ENCODE measurements at regions of chr2 and their contacts with region 1.

Region 1: GRCh38 chr2:97710596-97711386 is 2.6 kb upstream of the ZAP70 start:
- DNase-seq: no peak
- H3K4me3 ChIP-seq: no peak overlapping the region
- H3K27ac ChIP-seq: no peak overlapping the region
- H3K4me1 ChIP-seq: peaks cover 0 to 3% (median 0%) of the 10 kb centered on the region in 4 experiments; a peak in 3 of 7 replicates
- H3K27me3 ChIP-seq: no peaks in the 10 kb centered on the region
- CTCF ChIP-seq: no peak
- EP300 ChIP-seq: no peak
- POLR2A ChIP-seq: no peak
- RAD21 ChIP-seq: no peak

Region 2: DNA sequence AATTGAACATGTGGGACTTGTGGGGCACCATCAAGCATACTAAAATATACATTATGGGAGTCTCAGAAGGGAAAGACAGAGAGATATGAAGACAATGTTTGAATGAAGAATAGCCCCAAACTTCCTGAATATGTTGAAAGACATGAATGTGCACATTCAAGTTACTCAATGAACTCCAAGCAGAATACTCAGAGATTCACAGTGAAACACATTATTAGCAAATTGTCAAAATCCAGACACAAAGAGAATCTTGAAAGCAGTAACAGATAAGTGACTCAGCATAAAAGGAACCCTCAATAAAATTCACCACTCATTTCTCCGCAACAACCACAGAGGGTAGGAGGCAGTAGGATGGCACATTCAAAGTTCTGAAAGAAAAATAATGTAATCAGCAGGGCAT is 32.5 kb before region 1 on chr2:
- CTCF ChIA-PET with region 1: no interaction called
- POLR2A ChIA-PET with region 1: no interaction called
- DNase-seq: no peak
- H3K4me3 ChIP-seq: no peak overlapping the region
- H3K27ac ChIP-seq: no peak overlapping the region
- H3K4me1 ChIP-seq: 0 out of 7 replicates have a peak, but pooled peaks cover 0 to 3% (median under 1%) of the 10 kb centered on the region in 4 experiments
- H3K27me3 ChIP-seq: no peaks in the 10 kb centered on the region
- CTCF ChIP-seq: no peak
- EP300 ChIP-seq: no peak
- POLR2A ChIP-seq: no peak
- RAD21 ChIP-seq: no peak

Region 3: GRCh38 chr2:97728091-97728731 is 17.4 kb after region 1 on chr2:
- CTCF ChIA-PET with region 1: interaction called, 22 read pairs
- POLR2A ChIA-PET with region 1: interaction called, 3 read pairs
- DNase-seq: no peak
- H3K4me3 ChIP-seq: no peak overlapping the region
- H3K27ac ChIP-seq: no peak overlapping the region
- H3K4me1 ChIP-seq: no peaks in the 10 kb centered on the region; a peak in 1 of 7 replicates
- H3K27me3 ChIP-seq: no peaks in the 10 kb centered on the region
- CTCF ChIP-seq: no peak
- EP300 ChIP-seq: no peak
- POLR2A ChIP-seq: no peak
- RAD21 ChIP-seq: no peak

Region 4: GRCh38 chr2:97900806-97901205 is 190.0 kb after region 1 on chr2:
- CTCF ChIA-PET with region 1: no interaction called
- POLR2A ChIA-PET with region 1: no interaction called
- DNase-seq: no peak
- H3K4me3 ChIP-seq: no peak overlapping the region
- H3K27ac ChIP-seq: no peak overlapping the region
- H3K4me1 ChIP-seq: no peaks in the 10 kb centered on the region
- H3K27me3 ChIP-seq: no peaks in the 10 kb centered on the region; a peak in 1 of 7 replicates
- CTCF ChIP-seq: no peak
- EP300 ChIP-seq: no peak
- POLR2A ChIP-seq: no peak
- RAD21 ChIP-seq: no peak

Measured in H1 (cell line).